ENCODE measurements at regions of chr17 and their contacts with region 1.

Region 1: GRCh38 chr17:28398280-28398981 is 7.6 kb downstream of the SLC46A1 start:
- DNase-seq: peak; percentile 62 to 86
- H3K4me3 ChIP-seq: no peak overlapping the region
- H3K4me3 Mint-ChIP-seq: peak overlapping the region; percentile 9
- H3K27ac Mint-ChIP-seq: peak overlapping the region; percentile 30
- H3K4me1 ChIP-seq: peaks cover 63% of the 10 kb centered on the region
- H3K4me1 Mint-ChIP-seq: peaks cover 42% of the 10 kb centered on the region
- H3K27me3 ChIP-seq: no peaks in the 10 kb centered on the region
- H3K27me3 Mint-ChIP-seq: no peaks in the 10 kb centered on the region
- CTCF ChIP-seq: no peak

Region 2: GRCh38 chr17:28371245-28372202 is 26.9 kb before region 1 on chr17 and contains the start of gene SARM1:
- CTCF ChIA-PET with region 1: interaction called, 10 read pairs
- POLR2A ChIA-PET with region 1: interaction called, 6 read pairs
- intact Hi-C with region 1: no loop called
- DNase-seq: peak; percentile 99 to 100
- H3K4me3 ChIP-seq: peak within 1 kb of the TSS; percentile 40
- H3K4me3 Mint-ChIP-seq: peak within 1 kb of the TSS; percentile 75
- H3K27ac Mint-ChIP-seq: peak within 1 kb of the TSS; percentile 88
- H3K4me1 ChIP-seq: peaks cover 46% of the 10 kb centered on the region
- H3K4me1 Mint-ChIP-seq: peaks cover 54% of the 10 kb centered on the region
- H3K27me3 ChIP-seq: no peaks in the 10 kb centered on the region
- H3K27me3 Mint-ChIP-seq: no peaks in the 10 kb centered on the region
- CTCF ChIP-seq: no peak
- total RNA-seq, gene SARM1: 32.8 and 34.4 TPM in 2 replicates

Region 3: GRCh38 chr17:28384281-28385036 is 14.0 kb before region 1 on chr17:
- CTCF ChIA-PET with region 1: interaction called, 5 read pairs
- POLR2A ChIA-PET with region 1: interaction called, 9 read pairs
- intact Hi-C with region 1: loop called (anchors 1 kb)
- DNase-seq: peak; percentile 83 to 86
- H3K4me3 ChIP-seq: peak overlapping the region; percentile 52
- H3K4me3 Mint-ChIP-seq: peak overlapping the region; percentile 89
- H3K27ac Mint-ChIP-seq: peak overlapping the region; percentile 18
- H3K4me1 ChIP-seq: peaks cover 31% of the 10 kb centered on the region
- H3K4me1 Mint-ChIP-seq: peaks cover 17% of the 10 kb centered on the region
- H3K27me3 ChIP-seq: no peaks in the 10 kb centered on the region
- H3K27me3 Mint-ChIP-seq: no peaks in the 10 kb centered on the region
- CTCF ChIP-seq: no peak

Region 4: DNA sequence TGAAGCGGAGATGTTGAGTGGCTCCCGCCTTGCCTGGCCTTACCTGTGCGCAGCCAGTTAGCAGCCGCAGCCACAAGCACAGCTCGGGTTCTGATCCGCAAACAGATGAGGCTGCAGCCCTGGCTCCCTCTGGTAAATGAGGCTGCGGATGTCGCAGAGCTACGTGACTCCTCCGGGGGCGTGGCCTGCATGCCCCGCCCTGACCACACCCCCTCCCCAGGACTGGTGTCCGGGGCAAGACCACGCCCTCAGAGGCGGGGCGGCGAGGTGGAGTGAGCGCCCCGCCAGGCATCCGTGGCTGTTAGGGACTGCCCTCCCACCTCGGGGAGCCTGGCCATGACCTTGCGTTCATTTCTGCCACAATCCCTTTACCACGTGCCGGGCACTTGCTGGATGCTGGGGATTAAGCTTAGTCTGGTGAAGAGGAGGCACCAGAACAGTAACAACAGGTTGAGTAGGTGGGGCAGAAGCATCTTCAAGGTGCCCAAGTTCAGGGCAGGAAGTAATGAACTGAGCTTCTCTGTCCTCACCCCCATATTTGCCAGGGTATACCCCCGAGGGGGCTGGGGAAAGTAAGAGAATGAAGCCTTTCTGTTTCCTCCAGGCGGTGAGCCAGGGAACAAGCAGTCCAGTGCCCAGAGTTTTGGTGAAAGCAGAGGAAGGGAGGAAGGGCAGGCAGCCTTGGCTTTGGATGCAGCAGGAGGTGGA is 178.5 kb after region 1 on chr17 and contains the start of gene ALDOC:
- CTCF ChIA-PET with region 1: no interaction called
- POLR2A ChIA-PET with region 1: no interaction called
- intact Hi-C with region 1: no loop called
- DNase-seq: peak; percentile 96 to 97
- H3K4me3 ChIP-seq: peak within 1 kb of the TSS; percentile 34
- H3K4me3 Mint-ChIP-seq: peak within 1 kb of the TSS; percentile 61
- H3K27ac Mint-ChIP-seq: peak within 1 kb of the TSS; percentile 40
- H3K4me1 ChIP-seq: peaks cover 23% of the 10 kb centered on the region
- H3K4me1 Mint-ChIP-seq: peaks cover 20% of the 10 kb centered on the region
- H3K27me3 ChIP-seq: no peaks in the 10 kb centered on the region
- H3K27me3 Mint-ChIP-seq: no peaks in the 10 kb centered on the region
- CTCF ChIP-seq: no peak
- total RNA-seq, gene ALDOC: 16.3 and 17.7 TPM in 2 replicates

Measured in Caco-2 (cell line).